IMR-90 (cell line): ENCODE measurements at regions of chr22 and their contacts with region 1.

Region 1: DNA sequence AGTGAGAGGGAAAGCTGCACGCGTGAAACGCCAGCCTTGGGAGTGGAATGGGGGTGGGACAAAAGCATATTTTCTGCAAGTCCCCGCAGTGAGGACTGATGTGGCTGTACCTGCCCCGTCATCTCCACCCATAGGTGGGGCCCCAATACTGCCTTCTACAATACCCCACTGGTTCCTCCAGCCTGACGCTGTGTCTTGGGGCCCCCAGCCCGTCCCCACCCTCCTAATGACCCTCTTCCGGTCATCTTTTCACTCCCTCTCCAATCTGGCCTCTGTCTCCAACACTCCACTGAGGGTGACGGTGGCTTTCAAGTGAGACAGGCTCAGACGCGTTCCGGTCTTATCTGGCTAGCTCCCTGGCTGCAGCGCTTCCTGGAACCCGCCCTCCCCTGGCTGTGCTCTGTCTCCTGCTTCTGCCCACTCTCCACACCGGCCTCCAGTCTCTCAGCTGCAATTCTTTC is 104.2 kb downstream of the MICAL3 start:
- DNase-seq: peak; percentile 62
- ATAC-seq: peak; percentile 63
- H3K4me3 ChIP-seq: no peak overlapping the region
- H3K27ac ChIP-seq: no peak overlapping the region
- H3K4me1 ChIP-seq: peaks cover 33% of the 10 kb centered on the region
- H3K27me3 ChIP-seq: no peaks in the 10 kb centered on the region
- CTCF ChIP-seq: 0 out of 2 replicates have a peak, but pooled peaks have one; percentile 2
- POLR2A ChIP-seq: no peak
- RAD21 ChIP-seq: no peak; the same call in 1 of the 2 replicates

Region 2: GRCh38 chr22:17820879-17821439 is 99.2 kb before region 1 on chr22:
- CTCF ChIA-PET with region 1: no interaction called
- POLR2A ChIA-PET with region 1: no interaction called
- dilution Hi-C with region 1: no loop called
- in situ Hi-C with region 1: no loop called
- intact Hi-C with region 1: no loop called
- DNase-seq: no peak
- ATAC-seq: no peak
- H3K4me3 ChIP-seq: no peak overlapping the region
- H3K27ac ChIP-seq: no peak overlapping the region
- H3K4me1 ChIP-seq: no peaks in the 10 kb centered on the region
- H3K27me3 ChIP-seq: no peaks in the 10 kb centered on the region
- CTCF ChIP-seq: no peak
- POLR2A ChIP-seq: no peak
- RAD21 ChIP-seq: no peak

Region 3: DNA sequence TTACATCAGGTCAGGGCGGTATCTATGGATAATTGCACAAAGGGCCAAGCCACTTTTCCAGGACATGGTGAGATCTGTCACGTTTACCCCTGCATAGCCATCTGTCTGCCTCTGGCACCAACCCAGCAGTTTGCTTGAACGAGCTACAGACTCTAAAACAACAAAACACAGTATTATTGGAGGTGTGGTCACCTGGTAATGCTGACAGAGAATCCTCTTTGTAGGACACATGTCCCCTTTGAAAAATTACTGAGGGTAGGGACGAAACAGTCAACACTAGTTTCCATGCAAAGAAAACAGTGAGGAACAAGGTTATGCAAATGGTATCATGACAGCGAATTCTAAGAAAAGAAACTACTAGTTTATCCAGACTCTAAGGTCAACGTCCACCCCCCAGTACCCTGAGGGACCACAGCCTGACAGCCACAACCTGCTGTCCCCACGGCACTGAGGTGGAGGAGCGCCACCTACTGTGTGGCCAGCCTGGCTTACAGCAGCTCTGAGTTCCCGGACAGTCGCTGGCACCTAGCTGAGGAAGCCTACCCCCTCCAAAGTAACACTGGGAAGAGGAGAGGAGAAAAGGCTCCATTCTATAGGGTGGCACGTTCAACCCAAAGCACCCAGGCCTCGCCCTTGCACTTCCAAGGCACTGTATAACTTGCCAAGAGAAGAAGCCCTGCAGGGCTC is 28.6 kb before region 1 on chr22:
- CTCF ChIA-PET with region 1: no interaction called
- POLR2A ChIA-PET with region 1: no interaction called
- dilution Hi-C with region 1: no loop called
- in situ Hi-C with region 1: no loop called
- intact Hi-C with region 1: no loop called
- DNase-seq: no peak
- ATAC-seq: no peak
- H3K4me3 ChIP-seq: no peak overlapping the region
- H3K27ac ChIP-seq: no peak overlapping the region
- H3K4me1 ChIP-seq: peaks cover 7% of the 10 kb centered on the region
- H3K27me3 ChIP-seq: no peaks in the 10 kb centered on the region
- CTCF ChIP-seq: 0 out of 2 replicates have a peak, but pooled peaks have one; percentile 1
- POLR2A ChIP-seq: no peak
- RAD21 ChIP-seq: no peak

Region 4: DNA sequence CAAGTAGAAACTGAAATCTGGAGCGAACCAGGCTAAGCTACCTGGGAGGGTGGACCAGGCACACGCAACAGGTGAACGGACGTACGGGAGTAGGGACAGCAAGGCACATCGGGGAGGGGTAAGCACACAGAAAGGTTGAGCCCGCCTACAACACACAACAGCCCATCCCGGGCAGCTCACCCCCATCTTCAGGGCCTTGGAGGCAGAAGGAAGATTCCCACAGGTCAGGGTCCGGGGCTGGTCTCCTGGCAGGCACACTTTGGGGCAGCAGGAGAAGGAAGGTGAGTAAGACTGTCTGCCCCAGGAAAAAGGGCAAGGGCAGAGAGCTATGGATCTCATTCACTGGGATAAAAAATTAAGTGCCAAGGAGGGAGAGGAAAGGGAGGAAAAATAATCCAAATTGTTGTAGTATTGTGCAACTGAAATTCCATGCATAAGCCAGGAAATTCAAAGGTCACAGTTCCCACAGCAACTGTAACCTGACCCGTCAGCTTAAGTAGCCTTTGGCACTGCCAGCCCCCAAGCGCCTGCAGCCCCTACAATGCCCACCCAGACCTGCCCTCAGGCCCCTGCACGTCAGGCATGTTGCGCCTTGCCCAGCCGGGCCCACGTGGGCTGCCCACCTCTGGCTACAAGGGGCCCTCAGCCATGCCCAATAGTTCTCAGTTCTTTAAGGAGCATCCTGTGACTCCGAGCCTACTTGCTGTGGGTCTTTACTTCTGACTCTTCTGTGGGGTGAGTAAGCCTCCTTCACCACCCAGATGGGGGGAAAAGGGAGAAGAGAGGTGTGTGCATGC is 52.4 kb after region 1 on chr22:
- CTCF ChIA-PET with region 1: interaction called, 4 read pairs
- POLR2A ChIA-PET with region 1: no interaction called
- dilution Hi-C with region 1: no loop called
- in situ Hi-C with region 1: no loop called
- intact Hi-C with region 1: loop called (anchors 5 kb)
- DNase-seq: peak; percentile 85
- ATAC-seq: peak; percentile 51
- H3K4me3 ChIP-seq: no peak overlapping the region
- H3K27ac ChIP-seq: peak overlapping the region; percentile 88
- H3K4me1 ChIP-seq: peaks cover 41% of the 10 kb centered on the region
- H3K27me3 ChIP-seq: no peaks in the 10 kb centered on the region
- CTCF ChIP-seq: no peak
- POLR2A ChIP-seq: no peak
- RAD21 ChIP-seq: no peak